Panc1 (cell line): ENCODE measurements at regions of chr15 and their contacts with region 1.

Region 1: DNA sequence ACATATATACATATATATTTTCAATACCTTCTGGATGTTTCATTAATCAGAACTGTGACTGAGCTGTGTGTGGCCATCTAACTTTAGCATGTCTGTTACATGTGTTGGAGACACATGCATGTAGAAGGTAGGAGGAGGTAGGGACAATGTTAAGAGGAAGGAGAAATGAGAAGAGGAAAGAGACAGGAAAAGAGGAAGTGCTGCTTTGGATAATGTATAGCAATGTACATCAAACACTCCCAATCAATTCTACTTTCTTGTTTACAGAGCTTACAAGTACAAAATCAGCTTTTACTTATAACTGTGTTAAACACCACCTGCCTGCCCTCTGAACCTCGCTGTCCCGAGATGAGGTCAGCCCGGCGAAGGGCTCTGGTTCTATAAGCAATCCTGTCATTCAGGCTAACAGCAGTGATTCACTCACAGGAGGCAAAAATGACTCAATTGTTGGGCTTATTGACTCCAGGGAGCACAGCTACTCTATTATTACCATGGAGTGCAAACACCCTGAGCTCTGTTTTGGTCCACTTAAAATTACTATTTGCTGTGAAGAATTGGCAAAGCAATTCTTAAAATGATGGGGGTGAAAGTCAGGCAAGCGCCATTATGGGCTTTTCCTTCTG is 188.9 kb downstream of the MEIS2 start:
- DNase-seq: peak; percentile 18
- ATAC-seq: peak; percentile 66; the same call in 1 of the 2 replicates
- H3K4me3 ChIP-seq: no peak overlapping the region
- H3K27ac ChIP-seq: peak overlapping the region; percentile 10; the same call in 1 of the 2 replicates
- H3K4me1 ChIP-seq: peaks cover 5% of the 10 kb centered on the region; the same call in 1 of the 2 replicates
- H3K27me3 ChIP-seq: no peaks in the 10 kb centered on the region
- CTCF ChIP-seq: no peak

Region 2: DNA sequence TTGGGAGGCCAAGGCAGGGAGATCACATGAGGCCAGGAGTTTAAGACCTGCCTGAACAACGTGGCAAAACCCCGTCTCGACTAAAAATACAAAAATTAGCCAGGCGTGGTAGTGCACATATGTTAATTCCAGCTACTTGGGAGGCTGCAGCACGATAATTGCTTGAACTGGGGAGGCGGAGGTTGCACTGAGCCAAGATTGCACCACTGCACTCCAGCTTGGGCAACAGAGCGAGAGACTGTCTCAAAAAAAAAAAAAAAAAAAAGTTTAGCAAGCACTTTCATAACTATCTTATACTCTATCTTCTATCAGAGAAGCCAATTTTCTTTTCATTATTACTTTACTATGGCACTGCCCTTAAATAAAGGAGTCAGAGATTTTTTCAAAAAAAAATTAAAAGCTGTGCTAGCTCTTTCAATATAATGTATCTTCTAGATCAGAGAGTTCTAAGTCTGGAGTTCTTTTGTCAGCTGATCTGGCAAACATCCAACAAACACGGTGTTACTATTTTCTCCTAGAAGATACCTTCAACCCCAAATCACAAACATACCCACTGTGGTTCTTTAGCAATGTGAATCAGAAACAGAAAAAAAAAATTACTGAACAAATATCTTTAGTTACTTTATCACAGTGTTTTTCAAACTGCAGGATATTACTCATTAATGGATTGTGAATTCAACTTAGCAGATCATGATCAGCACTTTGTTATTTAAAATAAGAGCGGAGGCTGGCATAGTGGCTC is 1926.4 kb before region 1 on chr15:
- CTCF ChIA-PET with region 1: no interaction called
- POLR2A ChIA-PET with region 1: interaction called, 11 read pairs
- in situ Hi-C with region 1: no loop called
- intact Hi-C with region 1: no loop called
- DNase-seq: no peak
- ATAC-seq: no peak
- H3K4me3 ChIP-seq: no peak overlapping the region
- H3K27ac ChIP-seq: no peak overlapping the region
- H3K4me1 ChIP-seq: peaks cover 22% of the 10 kb centered on the region
- H3K27me3 ChIP-seq: no peaks in the 10 kb centered on the region
- CTCF ChIP-seq: no peak

Region 3: DNA sequence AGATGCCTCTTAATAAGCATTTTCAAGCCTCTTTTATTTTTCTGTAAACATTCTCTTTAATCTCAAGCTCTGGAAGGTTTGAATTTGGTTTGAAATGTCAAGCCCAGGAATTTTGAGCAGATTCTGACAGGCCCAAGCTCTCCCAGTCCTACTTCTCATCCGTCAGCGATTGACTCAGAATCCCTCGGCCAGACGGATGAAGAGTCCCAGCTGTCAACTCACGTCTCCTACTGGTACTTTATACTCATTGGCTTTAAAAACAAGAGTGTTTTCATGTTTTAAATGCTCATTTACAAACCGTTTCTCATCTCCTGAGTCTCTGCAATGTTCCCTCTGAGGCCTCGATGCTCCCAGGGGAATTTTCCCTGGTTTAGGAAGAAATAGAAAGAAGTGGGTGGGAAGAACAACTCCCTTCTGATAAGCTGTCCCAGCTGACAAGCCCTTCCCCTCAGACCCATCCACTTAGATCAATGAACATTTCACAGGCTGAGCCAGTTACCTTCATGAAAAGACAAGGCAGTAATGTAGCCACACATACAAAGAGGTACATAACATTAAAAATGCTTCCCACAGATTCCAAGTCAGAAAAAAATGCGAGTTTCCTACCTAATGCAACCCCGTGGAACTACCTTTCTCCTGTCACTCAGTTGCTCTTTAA is 887.3 kb before region 1 on chr15:
- CTCF ChIA-PET with region 1: no interaction called
- POLR2A ChIA-PET with region 1: no interaction called
- in situ Hi-C with region 1: no loop called
- intact Hi-C with region 1: no loop called
- DNase-seq: no peak
- ATAC-seq: no peak
- H3K4me3 ChIP-seq: no peak overlapping the region
- H3K27ac ChIP-seq: no peak overlapping the region
- H3K4me1 ChIP-seq: no peaks in the 10 kb centered on the region
- H3K27me3 ChIP-seq: no peaks in the 10 kb centered on the region
- CTCF ChIP-seq: no peak

Region 4: GRCh38 chr15:36479200-36479896 is 432.1 kb before region 1 on chr15:
- CTCF ChIA-PET with region 1: no interaction called
- POLR2A ChIA-PET with region 1: no interaction called
- in situ Hi-C with region 1: no loop called
- intact Hi-C with region 1: no loop called
- DNase-seq: no peak
- ATAC-seq: no peak
- H3K4me3 ChIP-seq: no peak overlapping the region
- H3K27ac ChIP-seq: no peak overlapping the region
- H3K4me1 ChIP-seq: no peaks in the 10 kb centered on the region
- H3K27me3 ChIP-seq: no peaks in the 10 kb centered on the region
- CTCF ChIP-seq: no peak

Region 5: DNA sequence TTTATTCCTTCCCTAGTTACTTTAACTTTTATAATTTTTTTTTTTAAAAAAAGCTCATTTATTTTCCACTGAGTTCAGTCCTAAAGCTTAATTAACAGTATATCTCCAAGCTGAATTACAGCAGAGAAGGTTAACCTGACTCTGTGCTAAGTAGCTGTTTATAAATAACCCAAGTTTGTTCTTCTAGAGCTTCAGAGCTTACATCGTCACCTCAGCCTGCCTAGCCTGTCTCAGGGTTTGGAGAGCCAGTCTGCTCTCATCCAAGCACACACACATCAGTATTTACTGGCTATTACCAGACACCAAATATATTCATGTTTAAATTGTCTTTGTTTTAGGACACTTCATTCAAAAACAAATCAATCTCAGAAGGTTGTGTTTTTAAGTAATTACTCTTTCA is 177.1 kb before region 1 on chr15:
- CTCF ChIA-PET with region 1: no interaction called
- POLR2A ChIA-PET with region 1: no interaction called
- in situ Hi-C with region 1: no loop called
- intact Hi-C with region 1: no loop called
- DNase-seq: no peak
- ATAC-seq: no peak
- H3K4me3 ChIP-seq: no peak overlapping the region
- H3K27ac ChIP-seq: no peak overlapping the region
- H3K4me1 ChIP-seq: no peaks in the 10 kb centered on the region
- H3K27me3 ChIP-seq: no peaks in the 10 kb centered on the region
- CTCF ChIP-seq: no peak

Region 6: GRCh38 chr15:36936613-36937012 is 25.2 kb after region 1 on chr15:
- CTCF ChIA-PET with region 1: no interaction called
- POLR2A ChIA-PET with region 1: interaction called, 14 read pairs
- in situ Hi-C with region 1: no loop called
- intact Hi-C with region 1: no loop called
- DNase-seq: no peak
- ATAC-seq: no peak
- H3K4me3 ChIP-seq: no peak overlapping the region
- H3K27ac ChIP-seq: no peak overlapping the region
- H3K4me1 ChIP-seq: no peaks in the 10 kb centered on the region
- H3K27me3 ChIP-seq: no peaks in the 10 kb centered on the region
- CTCF ChIP-seq: no peak